Activated CD4-positive, alpha-beta T cell treated with anti-CD3 and anti-CD28 coated beads for 36 hours (primary cell): ENCODE measurements at regions of chr18 and their contacts with region 1.

Region 1: DNA sequence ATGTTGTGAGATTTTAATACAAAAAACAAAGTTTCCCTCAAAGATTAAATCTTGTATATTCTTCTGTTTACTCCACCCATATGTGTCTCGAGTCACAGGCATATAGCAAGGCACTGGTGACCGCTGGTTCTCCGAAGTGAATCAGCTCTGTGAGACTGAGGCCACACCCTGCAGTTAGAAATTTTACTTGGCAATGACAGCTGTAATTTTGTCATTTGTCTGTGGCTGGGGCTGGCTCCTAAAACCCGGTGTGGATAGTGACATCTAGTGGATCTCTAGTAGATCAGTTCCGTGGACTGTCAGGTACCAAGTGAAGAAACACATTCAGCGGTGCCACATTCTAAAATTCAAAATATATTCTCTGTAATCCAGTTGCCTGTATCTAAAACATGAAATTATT is 278.0 kb downstream of the NEDD4L start:
- DNase-seq: peak; percentile 75
- ATAC-seq: peak; percentile 99
- H3K4me3 Mint-ChIP-seq: no peak overlapping the region
- H3K27ac Mint-ChIP-seq: peak overlapping the region; percentile 23
- H3K4me1 Mint-ChIP-seq: peaks cover 12% of the 10 kb centered on the region
- H3K27me3 Mint-ChIP-seq: peaks cover 5% of the 10 kb centered on the region

Region 2: DNA sequence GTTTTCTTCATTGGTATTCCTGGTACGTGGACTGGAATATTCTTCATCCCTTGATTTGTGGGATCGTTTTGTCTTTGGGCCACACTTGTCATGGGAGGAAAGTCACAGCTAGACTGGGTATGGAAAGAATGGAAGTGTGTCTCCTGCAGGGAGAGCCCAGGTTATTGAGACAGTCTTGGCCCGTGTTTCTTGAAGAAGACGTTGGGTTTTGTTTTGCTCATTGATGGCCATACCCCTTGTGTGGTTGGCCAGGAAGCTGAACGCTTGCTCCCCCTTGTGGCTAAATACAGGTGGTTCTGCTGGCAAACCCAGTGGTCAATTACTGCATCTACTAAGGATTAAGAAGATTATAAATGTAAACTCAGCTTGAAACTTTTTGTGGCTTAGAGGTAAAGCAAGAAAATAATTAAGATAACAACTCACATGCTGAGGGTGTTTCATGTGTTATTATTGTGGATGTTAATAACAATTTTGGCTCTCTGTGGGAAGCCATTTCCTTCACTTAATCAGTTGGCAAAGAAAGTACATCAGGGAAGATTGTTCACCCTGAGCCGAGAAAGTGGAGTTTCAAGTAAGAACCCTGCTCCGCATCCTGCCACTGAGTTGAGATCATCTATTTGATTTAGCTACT is 186.2 kb before region 1 on chr18:
- CTCF ChIA-PET with region 1: interaction called, 3 read pairs
- POLR2A ChIA-PET with region 1: no interaction called
- intact Hi-C with region 1: loop called in 1 of 2 experiments (anchors 1 kb)
- DNase-seq: peak; percentile 72
- ATAC-seq: peak; percentile 84
- H3K4me3 Mint-ChIP-seq: no peak overlapping the region
- H3K27ac Mint-ChIP-seq: no peak overlapping the region
- H3K4me1 Mint-ChIP-seq: peaks cover 7% of the 10 kb centered on the region
- H3K27me3 Mint-ChIP-seq: peaks cover 7% of the 10 kb centered on the region

Region 3: DNA sequence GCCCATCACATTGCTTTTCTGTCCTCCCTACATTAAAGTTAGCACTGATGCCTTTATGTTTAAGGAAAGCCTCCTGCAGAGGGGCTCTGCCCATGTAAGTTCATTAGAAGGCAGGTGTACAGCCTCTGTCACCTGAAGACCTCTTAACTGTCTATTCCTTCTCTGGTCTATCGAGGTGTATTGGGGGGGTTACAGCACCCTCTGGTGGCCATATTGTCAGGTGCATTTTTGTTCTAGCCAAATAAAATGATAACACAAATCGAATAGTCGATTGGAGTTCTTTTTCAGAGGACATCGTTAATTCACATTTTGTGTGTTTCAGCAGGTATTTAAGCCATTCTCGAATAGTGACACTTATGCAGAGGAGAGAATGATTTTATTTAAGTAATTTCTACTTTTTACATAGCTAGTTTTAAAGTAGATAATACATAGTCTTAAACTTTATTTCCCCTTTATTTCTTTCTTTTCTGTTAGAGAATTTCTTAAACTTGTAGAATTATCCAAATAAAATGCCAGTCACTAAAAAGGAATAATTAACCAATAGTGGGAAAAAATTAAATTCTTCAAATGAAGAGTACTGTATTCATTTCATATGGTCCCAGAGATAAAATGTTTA is 141.1 kb before region 1 on chr18:
- CTCF ChIA-PET with region 1: interaction called, 5 read pairs
- POLR2A ChIA-PET with region 1: no interaction called
- intact Hi-C with region 1: loop called (anchors 1 kb)
- DNase-seq: peak; percentile 77
- ATAC-seq: no peak
- H3K4me3 Mint-ChIP-seq: no peak overlapping the region
- H3K27ac Mint-ChIP-seq: no peak overlapping the region
- H3K4me1 Mint-ChIP-seq: no peaks in the 10 kb centered on the region
- H3K27me3 Mint-ChIP-seq: no peaks in the 10 kb centered on the region

Region 4: DNA sequence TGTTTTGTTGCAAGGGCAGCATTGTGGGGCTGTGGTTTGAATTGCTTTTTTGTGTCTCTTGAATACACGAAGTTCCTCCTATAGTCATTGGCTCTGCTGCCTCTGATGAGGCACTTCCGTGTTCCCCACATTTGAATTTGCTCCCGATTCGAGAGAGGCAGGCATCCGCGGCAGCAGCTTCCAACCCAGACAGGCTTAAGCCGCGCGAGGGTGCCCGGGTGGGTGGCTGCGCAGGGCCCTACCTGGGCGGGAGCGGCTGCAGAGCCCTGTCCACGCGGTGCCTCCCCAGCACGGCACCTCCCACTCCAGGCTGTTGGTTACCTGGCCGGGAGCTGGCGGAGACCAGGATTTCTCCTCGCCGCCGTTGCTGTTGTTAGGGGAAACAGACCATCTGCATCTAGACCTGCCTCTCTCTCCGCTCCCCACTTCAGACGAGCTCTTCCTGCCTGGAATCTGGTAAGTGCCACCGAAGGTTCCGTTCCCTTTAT is 126.7 kb before region 1 on chr18:
- CTCF ChIA-PET with region 1: interaction called, 4 read pairs
- POLR2A ChIA-PET with region 1: no interaction called
- intact Hi-C with region 1: loop called in 1 of 2 experiments (anchors 5 kb)
- DNase-seq: peak; percentile 42
- ATAC-seq: peak; percentile 83
- H3K4me3 Mint-ChIP-seq: peak overlapping the region; percentile 56
- H3K27ac Mint-ChIP-seq: no peak overlapping the region
- H3K4me1 Mint-ChIP-seq: peaks cover 14% of the 10 kb centered on the region
- H3K27me3 Mint-ChIP-seq: peaks cover 14% of the 10 kb centered on the region

Region 5: DNA sequence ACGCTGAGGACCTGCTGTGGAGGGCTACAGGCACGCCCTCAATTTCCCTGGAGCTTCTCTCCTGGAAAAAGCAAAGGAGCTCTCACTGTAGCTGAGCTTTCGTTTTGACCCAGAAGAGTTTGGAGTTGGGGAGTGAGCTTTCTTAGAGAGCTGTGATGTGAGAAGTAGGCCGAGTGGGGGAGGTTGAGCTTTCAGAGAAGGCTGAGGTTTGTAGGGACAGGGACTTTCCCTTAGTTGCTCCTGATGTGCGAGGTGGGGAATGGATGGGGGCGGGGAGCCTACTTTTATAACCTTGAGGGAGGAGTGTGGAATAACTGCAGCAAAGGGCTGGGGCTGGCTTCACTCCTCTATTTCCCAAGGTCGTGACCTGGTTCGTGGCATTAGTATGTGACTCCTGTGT is 589.8 kb after region 1 on chr18:
- CTCF ChIA-PET with region 1: no interaction called
- POLR2A ChIA-PET with region 1: no interaction called
- intact Hi-C with region 1: no loop called
- DNase-seq: no peak
- ATAC-seq: no peak
- H3K4me3 Mint-ChIP-seq: no peak overlapping the region
- H3K27ac Mint-ChIP-seq: no peak overlapping the region
- H3K4me1 Mint-ChIP-seq: peaks cover 17% of the 10 kb centered on the region
- H3K27me3 Mint-ChIP-seq: peaks cover 13% of the 10 kb centered on the region